MCF 10A (cell line): ENCODE measurements at regions of chr9 and their contacts with region 1.

Region 1: DNA sequence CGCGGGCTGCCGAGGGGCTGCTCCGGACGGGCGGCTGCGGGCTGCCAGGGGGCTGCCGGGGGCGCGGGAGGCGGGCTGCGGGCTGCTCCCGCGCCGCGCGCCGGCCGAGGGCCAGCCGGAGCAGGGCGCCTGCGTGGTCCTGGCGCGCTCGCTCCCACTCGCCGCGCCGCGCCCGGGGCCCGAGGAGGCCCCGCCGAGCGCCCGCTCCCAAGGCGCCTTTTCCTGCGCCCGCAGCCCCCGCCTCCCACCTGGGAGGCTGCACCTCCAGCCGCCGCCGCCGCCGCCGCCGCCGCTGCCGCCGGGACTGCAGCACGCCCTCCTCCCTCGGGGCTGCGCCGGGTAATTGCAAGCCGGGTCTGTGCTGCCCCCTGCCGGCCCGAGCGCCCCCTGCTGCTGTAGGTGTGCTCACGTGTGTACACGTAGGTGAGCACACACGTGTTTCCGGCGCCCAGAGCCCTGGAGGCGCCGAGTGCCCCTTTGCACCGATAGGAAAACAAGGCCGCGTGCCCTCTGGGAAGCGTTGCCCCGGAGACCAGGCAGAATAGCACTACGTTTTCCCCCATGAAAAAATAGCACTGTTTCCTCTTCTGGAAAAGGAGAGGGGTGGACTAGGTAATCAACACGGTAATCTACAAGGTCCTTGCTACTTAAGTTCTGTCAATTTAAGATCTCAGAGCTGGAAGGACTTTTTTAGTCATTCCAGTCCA is at the start of gene EPB41L4B:
- DNase-seq: peak; percentile 88
- H3K4me3 Mint-ChIP-seq: peak within 1 kb of the TSS; percentile 84
- H3K27ac Mint-ChIP-seq: peak within 1 kb of the TSS; percentile 67
- H3K4me1 Mint-ChIP-seq: peaks cover 41% of the 10 kb centered on the region
- H3K27me3 Mint-ChIP-seq: no peaks in the 10 kb centered on the region
- CTCF ChIP-seq: peak; percentile 96
- total RNA-seq, gene EPB41L4B: 20.2 and 23.7 TPM in 2 replicates

Region 2: DNA sequence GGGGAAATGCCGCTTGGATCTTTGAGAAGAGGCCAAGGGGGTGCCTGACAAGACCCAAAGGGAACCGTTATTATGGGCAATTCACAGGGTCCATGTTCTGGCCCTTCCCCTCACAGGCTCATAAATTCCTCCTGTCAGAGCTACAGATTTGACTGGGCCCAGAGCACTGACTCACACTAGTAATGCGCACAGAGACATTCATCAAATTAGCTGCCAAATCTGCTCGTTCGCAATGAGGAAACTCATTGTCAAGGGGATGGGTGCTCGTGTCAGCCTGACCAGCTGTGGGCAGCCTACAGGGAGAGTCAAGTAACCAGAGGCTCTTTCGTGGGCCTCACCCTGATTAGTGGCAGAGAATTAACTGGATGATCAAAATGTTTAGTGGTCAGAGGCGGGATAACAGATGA is 842.5 kb before region 1 on chr9:
- CTCF ChIA-PET with region 1: no interaction called
- POLR2A ChIA-PET with region 1: no interaction called
- intact Hi-C with region 1: loop called (anchors 10 kb)
- DNase-seq: peak; percentile 97
- H3K4me3 Mint-ChIP-seq: peak overlapping the region; percentile 37
- H3K27ac Mint-ChIP-seq: peak overlapping the region; percentile 89
- H3K4me1 Mint-ChIP-seq: peaks cover 47% of the 10 kb centered on the region
- H3K27me3 Mint-ChIP-seq: no peaks in the 10 kb centered on the region
- CTCF ChIP-seq: no peak

Region 3: DNA sequence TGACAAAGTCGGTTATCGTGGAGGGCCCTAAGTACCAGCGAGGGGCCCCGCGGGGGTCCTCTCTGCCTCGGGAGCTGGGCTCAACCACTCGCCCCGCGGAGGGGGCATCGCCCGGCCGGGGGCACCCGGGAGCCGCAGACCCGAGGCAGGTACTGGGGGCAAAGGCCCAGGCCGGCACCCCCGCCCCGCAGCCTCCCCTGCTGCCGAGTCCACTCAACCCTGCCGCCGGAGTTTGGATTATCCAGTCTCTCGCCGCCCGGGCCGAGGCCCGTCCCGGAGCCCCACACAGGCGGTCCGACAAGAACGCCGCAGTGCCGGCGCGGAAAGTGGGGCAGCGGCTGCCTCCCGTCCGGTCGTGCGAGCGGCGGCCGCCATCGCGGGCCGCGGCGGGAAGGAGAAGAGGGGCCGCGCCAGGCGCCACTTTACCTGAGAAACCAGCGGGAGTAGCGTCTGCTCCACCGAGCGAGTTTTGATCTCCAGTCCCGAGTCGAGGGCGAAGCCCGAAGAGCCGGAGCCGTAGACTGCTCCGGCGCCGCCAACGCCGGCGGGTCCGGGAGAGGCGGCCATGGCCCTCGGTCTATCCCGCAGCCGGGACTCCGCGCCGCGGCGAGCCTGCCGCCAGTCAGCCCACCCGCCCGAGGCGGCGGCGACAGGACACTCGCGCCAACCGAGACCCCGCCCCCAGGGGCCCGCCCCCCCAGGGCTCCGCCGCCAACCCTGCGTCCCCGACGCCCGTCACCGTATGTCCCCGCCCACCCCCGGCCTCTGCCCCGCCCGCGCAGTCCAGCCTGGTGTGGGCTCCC is 307.8 kb before region 1 on chr9 and contains the start of gene CTNNAL1:
- CTCF ChIA-PET with region 1: no interaction called
- POLR2A ChIA-PET with region 1: interaction called, 5 read pairs
- intact Hi-C with region 1: loop called (anchors 5 kb)
- DNase-seq: peak; percentile 82
- H3K4me3 Mint-ChIP-seq: peak within 1 kb of the TSS; percentile 84
- H3K27ac Mint-ChIP-seq: peak within 1 kb of the TSS; percentile 87
- H3K4me1 Mint-ChIP-seq: peaks cover 24% of the 10 kb centered on the region
- H3K27me3 Mint-ChIP-seq: no peaks in the 10 kb centered on the region
- CTCF ChIP-seq: no peak
- total RNA-seq, gene CTNNAL1: 48.6 and 85.6 TPM in 2 replicates

Region 4: DNA sequence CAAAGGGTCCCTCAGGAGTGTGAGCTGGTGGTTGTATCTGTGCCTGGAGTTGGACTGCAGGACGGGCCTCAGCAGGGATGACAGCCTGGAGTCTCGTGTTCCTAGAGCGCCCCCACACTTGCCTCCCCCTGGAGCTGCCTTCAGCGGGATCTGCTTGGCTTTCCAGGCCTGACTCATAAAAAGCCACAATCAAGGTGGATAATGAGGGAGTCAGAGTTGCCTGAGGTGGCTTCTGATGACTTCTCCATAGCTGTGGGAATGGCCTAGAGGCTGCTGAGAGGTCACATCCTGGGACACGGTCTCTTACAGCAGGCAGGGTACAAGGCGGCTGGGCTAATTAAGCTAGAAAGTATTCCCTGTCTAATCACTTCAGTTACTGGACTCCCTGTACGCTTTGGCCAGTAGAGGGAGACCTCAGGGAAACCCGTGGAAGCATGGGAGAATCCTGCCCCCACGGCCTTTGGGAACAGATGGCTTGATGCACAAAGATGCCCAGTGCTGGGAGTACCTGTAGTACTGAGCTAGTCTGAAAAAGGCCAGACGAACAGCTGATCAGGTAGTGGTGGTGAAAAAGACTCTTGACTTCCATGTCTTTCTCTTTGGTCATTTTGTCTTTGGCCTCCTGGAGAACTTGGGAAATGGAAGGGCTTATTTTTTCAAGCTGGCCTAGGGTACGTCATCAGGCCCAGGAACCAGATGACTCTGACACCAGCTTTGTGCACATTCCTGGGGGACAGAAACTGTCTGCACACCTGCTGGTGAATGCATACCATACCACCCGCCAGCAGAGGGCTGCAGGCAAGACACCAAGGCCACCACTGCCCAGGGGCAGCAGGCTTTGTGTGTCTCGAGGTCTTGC is 137.7 kb before region 1 on chr9:
- CTCF ChIA-PET with region 1: interaction called, 23 read pairs
- POLR2A ChIA-PET with region 1: no interaction called
- intact Hi-C with region 1: loop called (anchors 1 kb)
- DNase-seq: peak; percentile 65
- H3K4me3 Mint-ChIP-seq: no peak overlapping the region
- H3K27ac Mint-ChIP-seq: no peak overlapping the region
- H3K4me1 Mint-ChIP-seq: no peaks in the 10 kb centered on the region
- H3K27me3 Mint-ChIP-seq: no peaks in the 10 kb centered on the region
- CTCF ChIP-seq: peak; percentile 5

Region 5: GRCh38 chr9:109244157-109245132 is 76.5 kb before region 1 on chr9:
- CTCF ChIA-PET with region 1: interaction called, 11 read pairs
- POLR2A ChIA-PET with region 1: interaction called, 6 read pairs
- intact Hi-C with region 1: loop called (anchors 1 kb)
- DNase-seq: peak; percentile 73
- H3K4me3 Mint-ChIP-seq: no peak overlapping the region
- H3K27ac Mint-ChIP-seq: no peak overlapping the region
- H3K4me1 Mint-ChIP-seq: peaks cover 14% of the 10 kb centered on the region
- H3K27me3 Mint-ChIP-seq: no peaks in the 10 kb centered on the region
- CTCF ChIP-seq: peak; percentile 96

Region 6: GRCh38 chr9:109349421-109349846 is 28.5 kb after region 1 on chr9:
- CTCF ChIA-PET with region 1: interaction called, 13 read pairs
- POLR2A ChIA-PET with region 1: interaction called, 6 read pairs
- intact Hi-C with region 1: no loop called
- DNase-seq: peak; percentile 90
- H3K4me3 Mint-ChIP-seq: no peak overlapping the region
- H3K27ac Mint-ChIP-seq: no peak overlapping the region
- H3K4me1 Mint-ChIP-seq: peaks cover 16% of the 10 kb centered on the region
- H3K27me3 Mint-ChIP-seq: no peaks in the 10 kb centered on the region
- CTCF ChIP-seq: no peak

Region 7: GRCh38 chr9:109520478-109521132 is 199.7 kb after region 1 on chr9:
- CTCF ChIA-PET with region 1: no interaction called
- POLR2A ChIA-PET with region 1: no interaction called
- intact Hi-C with region 1: loop called (anchors 10 kb)
- DNase-seq: peak; percentile 82
- H3K4me3 Mint-ChIP-seq: no peak overlapping the region
- H3K27ac Mint-ChIP-seq: peak overlapping the region; percentile 49
- H3K4me1 Mint-ChIP-seq: peaks cover 10% of the 10 kb centered on the region
- H3K27me3 Mint-ChIP-seq: no peaks in the 10 kb centered on the region
- CTCF ChIP-seq: peak; percentile 85